Colonic mucosa (tissue), 4 donors: ENCODE measurements at regions of chr2 and their contacts with region 1.

Region 1: GRCh38 chr2:60560734-60561644 is 7.5 kb upstream of the BCL11A start:
- DNase-seq: no peak
- H3K4me3 ChIP-seq: no peak overlapping the region
- H3K27ac ChIP-seq: no peak overlapping the region
- H3K4me1 ChIP-seq: peaks cover 4% of the 10 kb centered on the region
- H3K27me3 ChIP-seq: no peaks in the 10 kb centered on the region
- CTCF ChIP-seq: peak; percentile 46

Region 2: DNA sequence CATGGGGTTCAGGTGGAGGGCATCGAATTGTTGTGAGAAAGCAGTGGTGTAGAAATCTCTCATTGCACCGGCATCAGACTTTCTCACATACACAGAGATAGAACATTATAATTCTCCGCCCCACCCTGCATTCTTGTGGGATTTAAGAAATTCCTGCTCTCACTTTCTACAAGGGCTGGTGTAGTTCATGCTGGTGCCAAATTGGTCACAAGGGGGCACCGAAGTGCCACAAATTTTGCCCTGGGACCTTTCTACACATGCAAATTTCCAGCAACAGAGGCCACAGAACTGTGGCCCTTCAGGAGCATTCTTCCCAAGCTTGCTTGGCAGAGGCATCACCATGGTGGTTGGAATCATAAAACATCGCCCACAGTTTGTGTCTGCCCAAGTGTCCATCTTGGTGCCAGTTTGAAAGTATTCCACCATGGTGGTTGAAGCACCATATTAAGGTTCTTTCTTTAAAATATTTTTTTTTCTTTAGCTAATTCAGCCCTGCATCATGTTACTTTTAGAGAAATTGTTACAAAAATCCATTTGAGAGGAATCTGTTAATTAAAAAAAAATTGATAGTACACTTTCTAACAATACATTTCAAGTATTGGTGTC is 1798.7 kb before region 1 on chr2:
- intact Hi-C with region 1: loop called (anchors 5 kb)
- DNase-seq: peak; percentile 19
- H3K4me3 ChIP-seq: no peak overlapping the region
- H3K27ac ChIP-seq: no peak overlapping the region
- H3K4me1 ChIP-seq: no peaks in the 10 kb centered on the region
- H3K27me3 ChIP-seq: no peaks in the 10 kb centered on the region
- CTCF ChIP-seq: peak; percentile 37

Region 3: GRCh38 chr2:59301466-59302402 is 1259.3 kb before region 1 on chr2:
- intact Hi-C with region 1: loop called (anchors 10 kb)
- DNase-seq: peak; percentile 34
- H3K4me3 ChIP-seq: no peak overlapping the region
- H3K27ac ChIP-seq: no peak overlapping the region
- H3K4me1 ChIP-seq: no peaks in the 10 kb centered on the region
- H3K27me3 ChIP-seq: no peaks in the 10 kb centered on the region
- CTCF ChIP-seq: peak; percentile 42

Region 4: GRCh38 chr2:60446413-60447267 is 114.3 kb before region 1 on chr2:
- intact Hi-C with region 1: no loop called
- DNase-seq: no peak
- H3K4me3 ChIP-seq: no peak overlapping the region
- H3K27ac ChIP-seq: no peak overlapping the region
- H3K4me1 ChIP-seq: no peaks in the 10 kb centered on the region
- H3K27me3 ChIP-seq: no peaks in the 10 kb centered on the region
- CTCF ChIP-seq: no peak